Esophagus squamous epithelium (tissue), 5 donors: ENCODE measurements at regions of chr14 and their contacts with region 1.

Region 1: DNA sequence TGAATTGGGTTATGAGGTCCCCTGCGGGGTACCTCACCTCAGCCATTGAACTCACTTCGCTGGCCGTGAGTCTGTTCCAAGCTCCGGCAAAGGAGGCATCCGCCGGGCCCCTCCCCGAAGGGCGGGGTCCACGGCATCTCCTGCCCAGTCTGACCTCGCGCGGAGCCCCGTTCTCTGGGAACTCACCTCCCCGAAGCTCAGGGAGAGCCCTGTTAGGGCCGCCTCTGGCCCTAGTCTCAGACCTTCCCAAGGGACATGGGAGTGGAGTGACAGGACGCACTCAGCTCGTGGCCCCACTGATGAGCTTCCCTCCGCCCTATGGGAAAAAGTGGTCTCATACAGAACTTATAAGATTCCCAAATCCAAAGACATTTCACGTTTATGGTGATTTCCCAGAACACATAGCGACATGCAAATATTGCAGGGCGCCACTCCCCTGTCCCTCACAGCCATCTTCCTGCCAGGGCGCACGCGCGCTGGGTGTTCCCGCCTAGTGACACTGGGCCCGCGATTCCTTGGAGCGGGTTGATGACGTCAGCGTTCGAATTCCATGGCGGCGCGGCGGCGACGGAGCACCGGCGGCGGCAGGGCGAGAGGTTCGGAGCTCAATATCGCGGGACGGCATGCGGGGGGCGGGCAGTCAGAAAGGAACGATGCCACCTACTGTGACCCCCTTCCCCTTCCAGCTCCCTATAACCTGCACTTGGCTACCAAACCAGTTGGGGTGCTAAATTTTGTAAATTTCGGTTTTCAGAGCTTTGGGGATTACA is at the start of gene PARP2:
- DNase-seq: peak; percentile 84
- H3K4me3 ChIP-seq: peak within 1 kb of the TSS; percentile 65 to 89 (median 74)
- H3K27ac ChIP-seq: peak within 1 kb of the TSS; percentile 93 to 97 (median 96)
- H3K4me1 ChIP-seq: peaks cover 5 to 18% (median 9%) of the 10 kb centered on the region in 3 donors
- H3K27me3 ChIP-seq: no peaks in the 10 kb centered on the region
- CTCF ChIP-seq: peak in 1 of 6 experiments; percentile 18
- POLR2A ChIP-seq: peak; percentile 19 to 94 (median 70)
- total RNA-seq, gene PARP2: 5.0 to 20.3 (median 11.7) TPM

Region 2: GRCh38 chr14:20413045-20413799 is 69.9 kb after region 1 on chr14 and contains the start of gene TEP1:
- intact Hi-C with region 1: loop called (anchors 10 kb)
- DNase-seq: peak; percentile 40
- H3K4me3 ChIP-seq: peak within 1 kb of the TSS; percentile 53 to 91 (median 85)
- H3K27ac ChIP-seq: peak within 1 kb of the TSS; percentile 88 to 99 (median 98)
- H3K4me1 ChIP-seq: peaks cover 0 to 35% (median 10%) of the 10 kb centered on the region in 3 donors
- H3K27me3 ChIP-seq: no peaks in the 10 kb centered on the region
- CTCF ChIP-seq: no peak
- POLR2A ChIP-seq: peak in 3 of 4 donors; percentile 11 to 84 (median 80)
- total RNA-seq, gene TEP1: 13.4 to 16.6 (median 14.7) TPM

Region 3: DNA sequence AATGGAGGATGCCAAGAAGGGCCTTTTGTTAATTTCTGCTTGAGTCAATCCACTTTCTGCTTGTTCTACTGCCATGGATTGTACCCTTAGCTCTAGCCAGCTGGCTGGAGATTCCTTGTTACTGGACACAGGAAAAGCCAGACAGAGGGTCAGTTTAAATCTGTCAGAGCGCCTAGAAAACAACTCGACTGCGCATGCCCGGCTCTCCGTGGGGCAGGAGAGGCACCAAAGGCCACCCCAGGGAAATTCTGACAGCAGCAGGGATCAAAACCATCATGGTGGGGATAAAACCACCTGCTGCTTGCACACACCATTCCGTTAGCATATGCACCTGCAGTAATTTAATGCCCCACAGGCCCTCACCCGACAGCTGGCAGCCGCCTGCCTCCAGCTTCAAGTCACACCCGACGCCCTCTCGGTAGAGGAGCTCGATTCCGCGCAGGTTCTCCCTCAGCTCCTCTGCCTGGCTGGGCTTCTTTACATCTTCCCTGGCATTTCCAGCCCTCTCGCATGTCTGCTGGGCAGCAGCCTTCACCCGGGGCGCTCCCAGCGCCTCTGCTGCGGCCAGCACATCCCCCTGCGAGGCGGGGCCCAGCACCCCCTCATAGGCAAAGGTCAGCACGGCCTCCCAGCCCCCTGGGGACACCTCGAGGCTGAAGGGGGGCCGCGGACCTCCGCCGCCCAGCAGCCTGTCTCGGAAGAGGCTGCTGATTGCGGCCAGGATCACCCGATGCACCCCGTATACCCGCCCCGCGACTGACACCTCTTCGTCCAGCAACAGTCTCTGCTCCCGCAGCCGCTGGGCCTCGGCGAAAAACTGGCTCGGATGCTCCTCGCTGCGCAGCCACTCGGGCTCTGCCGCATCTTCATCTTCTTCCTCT is 91.7 kb after region 1 on chr14:
- intact Hi-C with region 1: no loop called
- DNase-seq: no peak
- H3K4me3 ChIP-seq: peak overlapping the region in 3 of 4 donors; percentile 34 to 54 (median 39)
- H3K27ac ChIP-seq: peak overlapping the region in 3 of 4 donors; percentile 62 to 69 (median 69)
- H3K4me1 ChIP-seq: peaks cover 0 to 27% (median 0%) of the 10 kb centered on the region in 3 donors
- H3K27me3 ChIP-seq: peaks cover 0 to 27% (median 0%) of the 10 kb centered on the region in 4 donors
- CTCF ChIP-seq: no peak
- POLR2A ChIP-seq: no peak

Region 4: GRCh38 chr14:20454516-20455354 is 111.5 kb after region 1 on chr14 and contains the starts of genes APEX1 and OSGEP:
- intact Hi-C with region 1: loop called (anchors 5 kb)
- DNase-seq: peak; percentile 94
- H3K4me3 ChIP-seq: peak within 1 kb of the TSS; percentile 55 to 95 (median 84)
- H3K27ac ChIP-seq: peak within 1 kb of the TSS; percentile 85 to 98 (median 96)
- H3K4me1 ChIP-seq: peaks cover 18 to 58% (median 23%) of the 10 kb centered on the region in 3 donors
- H3K27me3 ChIP-seq: no peaks in the 10 kb centered on the region
- CTCF ChIP-seq: no peak
- POLR2A ChIP-seq: peak in 3 of 4 donors; percentile 55 to 82 (median 67)
- total RNA-seq, gene APEX1: 75.7 to 132 (median 115) TPM
- total RNA-seq, gene OSGEP: 22.3 to 41.6 (median 26.6) TPM